ENCODE measurements at regions of chr6 and their contacts with region 1.

Region 1: DNA sequence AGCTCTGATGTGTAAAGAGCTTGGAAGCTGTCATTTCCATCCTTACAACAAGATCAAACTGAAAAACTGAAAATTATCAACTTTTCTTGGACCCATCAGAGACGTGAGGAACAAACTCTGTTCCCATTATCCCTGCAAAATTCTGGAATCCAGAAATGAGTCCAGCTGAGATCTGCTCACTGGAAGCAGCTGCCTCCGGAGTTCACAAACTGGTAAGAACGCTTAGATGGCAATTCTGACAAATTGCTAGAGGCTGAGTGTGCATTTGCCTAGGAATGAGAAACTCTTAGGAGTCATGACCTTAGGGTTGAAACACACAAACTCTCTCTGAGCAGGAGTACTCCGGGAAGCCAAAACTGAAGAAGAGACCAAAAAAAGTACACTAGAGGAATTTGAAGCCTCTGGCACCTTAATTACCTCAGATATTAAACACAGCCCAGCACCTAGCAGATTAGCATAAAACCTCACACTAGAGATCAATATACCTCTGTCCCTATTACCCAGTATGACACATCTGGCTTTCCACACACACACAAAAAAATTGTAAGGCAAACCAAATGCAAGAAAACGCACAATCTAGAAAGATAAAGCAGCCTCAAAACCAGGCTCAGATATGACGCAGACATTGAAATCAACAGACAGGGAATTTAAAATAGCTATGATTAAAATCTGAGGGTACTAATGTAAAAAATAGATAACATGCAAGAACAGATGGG is 233.5 kb upstream of the SGK1 start:
- DNase-seq: peak; percentile 76
- H3K4me3 ChIP-seq: no peak overlapping the region
- H3K27ac ChIP-seq: peak overlapping the region; percentile 86
- H3K4me1 ChIP-seq: peaks cover 28% of the 10 kb centered on the region
- H3K27me3 ChIP-seq: no peaks in the 10 kb centered on the region
- CTCF ChIP-seq: no peak
- POLR2A ChIP-seq: no peak

Region 2: DNA sequence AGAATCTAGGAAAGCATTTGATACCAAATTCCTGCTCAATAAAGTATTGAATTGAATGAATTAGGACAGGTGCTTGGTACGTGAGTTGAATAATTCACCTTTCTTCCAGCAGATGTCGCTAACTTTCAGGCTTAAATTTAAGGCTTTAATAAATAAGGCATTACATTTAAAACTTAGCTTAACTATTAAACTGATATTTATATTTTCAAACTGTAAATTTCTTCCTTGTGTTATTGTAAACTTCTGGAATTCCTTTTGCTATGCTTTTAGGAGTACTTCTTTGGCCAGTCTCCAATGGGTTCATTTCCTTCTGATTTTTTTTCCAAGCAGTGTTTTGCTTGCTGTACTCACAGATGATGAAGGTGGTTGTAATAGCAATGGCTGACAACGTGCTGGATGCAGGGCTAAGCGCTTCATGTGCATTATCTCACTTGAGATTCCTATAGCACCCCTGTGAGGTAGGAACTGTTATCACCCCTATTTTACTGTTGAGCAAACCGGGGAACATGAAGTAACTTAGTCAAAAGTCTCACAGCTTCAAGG is 427.7 kb before region 1 on chr6:
- CTCF ChIA-PET with region 1: no interaction called
- POLR2A ChIA-PET with region 1: no interaction called
- dilution Hi-C with region 1: no loop called
- intact Hi-C with region 1: no loop called
- DNase-seq: peak; percentile 76
- H3K4me3 ChIP-seq: no peak overlapping the region
- H3K27ac ChIP-seq: no peak overlapping the region
- H3K4me1 ChIP-seq: no peaks in the 10 kb centered on the region
- H3K27me3 ChIP-seq: no peaks in the 10 kb centered on the region
- CTCF ChIP-seq: peak; percentile 38 to 42
- POLR2A ChIP-seq: no peak

Region 3: GRCh38 chr6:134288538-134289203 is 262.7 kb before region 1 on chr6:
- CTCF ChIA-PET with region 1: no interaction called
- POLR2A ChIA-PET with region 1: no interaction called
- dilution Hi-C with region 1: no loop called
- intact Hi-C with region 1: loop called (anchors 2 kb)
- DNase-seq: peak; percentile 74
- H3K4me3 ChIP-seq: no peak overlapping the region
- H3K27ac ChIP-seq: peak overlapping the region; percentile 100
- H3K4me1 ChIP-seq: peaks cover 25% of the 10 kb centered on the region
- H3K27me3 ChIP-seq: no peaks in the 10 kb centered on the region
- CTCF ChIP-seq: no peak
- POLR2A ChIP-seq: peak; percentile 30

Region 4: GRCh38 chr6:134422426-134423231 is 128.8 kb before region 1 on chr6:
- CTCF ChIA-PET with region 1: interaction called, 3 read pairs
- POLR2A ChIA-PET with region 1: no interaction called
- dilution Hi-C with region 1: loop called (anchors 25 kb)
- intact Hi-C with region 1: loop called (anchors 1 kb)
- DNase-seq: peak; percentile 81
- H3K4me3 ChIP-seq: no peak overlapping the region
- H3K27ac ChIP-seq: peak overlapping the region; percentile 90
- H3K4me1 ChIP-seq: peaks cover 68% of the 10 kb centered on the region
- H3K27me3 ChIP-seq: no peaks in the 10 kb centered on the region
- CTCF ChIP-seq: no peak
- POLR2A ChIP-seq: peak; percentile 61

Region 5: DNA sequence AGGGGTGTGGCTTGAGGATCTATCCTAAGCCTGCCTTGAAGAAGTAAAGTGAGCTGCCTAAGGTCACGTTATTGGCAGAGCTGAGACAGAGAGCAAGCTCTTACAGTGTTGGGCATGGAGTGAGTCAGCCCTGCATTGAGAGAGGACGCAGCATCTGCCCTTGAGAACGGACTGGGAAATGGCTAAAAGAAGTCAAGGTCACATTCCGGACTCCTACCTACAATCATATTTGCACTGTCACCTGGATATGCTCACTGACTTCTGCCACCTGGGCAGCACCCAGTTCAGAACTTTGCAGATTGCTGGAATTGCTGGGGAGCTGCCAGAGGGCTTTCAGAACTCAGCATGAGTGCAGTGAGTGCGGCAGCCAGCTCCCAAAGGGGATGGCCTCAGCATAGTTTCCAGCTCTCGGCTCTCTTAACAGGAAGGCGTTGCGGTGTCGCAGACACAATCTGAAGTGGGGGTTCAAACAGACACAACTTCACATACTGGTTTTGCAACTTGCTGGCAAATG is 34.2 kb before region 1 on chr6:
- CTCF ChIA-PET with region 1: interaction called, 3 read pairs
- POLR2A ChIA-PET with region 1: no interaction called
- dilution Hi-C with region 1: no loop called
- intact Hi-C with region 1: loop called (anchors 2 kb)
- DNase-seq: peak; percentile 75
- H3K4me3 ChIP-seq: no peak overlapping the region
- H3K27ac ChIP-seq: peak overlapping the region; percentile 65
- H3K4me1 ChIP-seq: peaks cover 38% of the 10 kb centered on the region
- H3K27me3 ChIP-seq: no peaks in the 10 kb centered on the region
- CTCF ChIP-seq: no peak
- POLR2A ChIP-seq: no peak

Region 6: GRCh38 chr6:134741200-134741536 is 189.8 kb after region 1 on chr6:
- CTCF ChIA-PET with region 1: interaction called, 3 read pairs
- POLR2A ChIA-PET with region 1: no interaction called
- dilution Hi-C with region 1: no loop called
- intact Hi-C with region 1: loop called (anchors 1 kb)
- DNase-seq: no peak
- H3K4me3 ChIP-seq: no peak overlapping the region
- H3K27ac ChIP-seq: peak overlapping the region; percentile 68
- H3K4me1 ChIP-seq: peaks cover 27% of the 10 kb centered on the region
- H3K27me3 ChIP-seq: no peaks in the 10 kb centered on the region
- CTCF ChIP-seq: peak in 1 of 2 donors; percentile 17
- POLR2A ChIP-seq: no peak